ENCODE measurements at regions of chr9 and their contacts with region 1.

Region 1: DNA sequence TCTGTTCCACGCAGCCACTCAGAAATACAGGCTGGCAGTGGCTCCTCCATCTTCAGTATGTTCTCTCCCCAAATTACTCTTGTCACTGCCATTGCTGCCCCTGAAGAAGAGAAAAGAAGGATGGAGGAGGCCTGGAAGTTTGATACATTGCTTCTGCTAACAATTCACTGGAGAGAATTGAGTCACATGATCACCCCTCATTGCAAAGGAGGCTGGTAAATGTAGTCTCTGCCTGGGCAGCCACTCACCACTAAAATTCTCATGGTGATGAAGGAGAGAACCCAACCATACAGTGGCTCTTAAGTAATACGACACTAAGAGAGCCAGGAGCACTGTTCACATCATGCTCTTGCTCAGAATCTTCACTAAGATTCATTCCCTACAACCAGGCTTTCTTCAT is 112.0 kb downstream of the DOCK8 start:
- DNase-seq: no peak
- H3K4me3 ChIP-seq: no peak overlapping the region
- H3K27ac ChIP-seq: no peak overlapping the region
- H3K4me1 ChIP-seq: no peaks in the 10 kb centered on the region
- H3K27me3 ChIP-seq: no peaks in the 10 kb centered on the region
- CTCF ChIP-seq: no peak

Region 2: GRCh38 chr9:286071-286740 is 40.5 kb before region 1 on chr9:
- CTCF ChIA-PET with region 1: no interaction called
- dilution Hi-C with region 1: loop called (anchors 5 kb)
- in situ Hi-C with region 1: no loop called
- intact Hi-C with region 1: no loop called
- DNase-seq: peak; percentile 12
- H3K4me3 ChIP-seq: no peak overlapping the region
- H3K27ac ChIP-seq: no peak overlapping the region
- H3K4me1 ChIP-seq: no peaks in the 10 kb centered on the region
- H3K27me3 ChIP-seq: peaks cover 2% of the 10 kb centered on the region
- CTCF ChIP-seq: no peak

Region 3: DNA sequence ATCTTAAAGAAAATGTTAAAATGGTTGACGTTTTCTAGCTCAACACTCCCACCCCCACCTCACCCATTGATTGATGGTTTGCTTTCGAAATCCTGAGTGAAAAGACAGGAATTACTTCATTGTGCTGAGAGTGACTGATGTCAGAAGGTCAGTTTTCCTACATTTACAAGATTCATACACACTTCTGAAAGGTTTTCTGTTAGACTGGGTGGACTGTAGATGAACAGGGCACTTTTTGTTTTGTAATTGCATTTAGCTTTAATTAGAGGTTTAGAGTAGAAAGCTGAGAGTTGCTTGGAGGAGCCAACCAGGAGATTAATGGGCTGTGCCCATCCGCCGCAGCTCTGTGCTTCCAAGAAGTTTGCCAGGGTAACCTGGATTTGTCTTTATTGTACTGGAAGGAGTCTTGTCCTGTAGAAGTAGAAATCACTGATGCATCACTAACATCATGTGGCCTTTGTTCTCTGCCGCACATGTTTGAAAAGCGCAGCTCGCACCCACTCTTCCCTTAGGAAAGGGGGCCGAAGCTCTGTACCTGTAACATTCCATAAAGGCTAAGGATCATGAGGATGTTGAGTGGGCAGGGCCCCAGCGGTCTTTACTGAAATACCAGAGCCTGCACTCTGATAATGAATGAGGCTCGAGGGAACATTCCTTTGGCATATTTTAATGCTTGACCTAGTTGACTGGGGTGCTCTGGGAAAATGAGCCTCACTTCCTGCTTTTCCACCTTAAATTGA is 247.2 kb after region 1 on chr9:
- CTCF ChIA-PET with region 1: no interaction called
- dilution Hi-C with region 1: no loop called
- in situ Hi-C with region 1: no loop called
- intact Hi-C with region 1: no loop called
- DNase-seq: no peak
- H3K4me3 ChIP-seq: no peak overlapping the region
- H3K27ac ChIP-seq: peak overlapping the region; percentile 35
- H3K4me1 ChIP-seq: peaks cover 10% of the 10 kb centered on the region
- H3K27me3 ChIP-seq: no peaks in the 10 kb centered on the region
- CTCF ChIP-seq: no peak

Measured in mammary epithelial cell (primary cell).